T-cell (primary cell): ENCODE measurements at regions of chr7 and their contacts with region 1.

Region 1: DNA sequence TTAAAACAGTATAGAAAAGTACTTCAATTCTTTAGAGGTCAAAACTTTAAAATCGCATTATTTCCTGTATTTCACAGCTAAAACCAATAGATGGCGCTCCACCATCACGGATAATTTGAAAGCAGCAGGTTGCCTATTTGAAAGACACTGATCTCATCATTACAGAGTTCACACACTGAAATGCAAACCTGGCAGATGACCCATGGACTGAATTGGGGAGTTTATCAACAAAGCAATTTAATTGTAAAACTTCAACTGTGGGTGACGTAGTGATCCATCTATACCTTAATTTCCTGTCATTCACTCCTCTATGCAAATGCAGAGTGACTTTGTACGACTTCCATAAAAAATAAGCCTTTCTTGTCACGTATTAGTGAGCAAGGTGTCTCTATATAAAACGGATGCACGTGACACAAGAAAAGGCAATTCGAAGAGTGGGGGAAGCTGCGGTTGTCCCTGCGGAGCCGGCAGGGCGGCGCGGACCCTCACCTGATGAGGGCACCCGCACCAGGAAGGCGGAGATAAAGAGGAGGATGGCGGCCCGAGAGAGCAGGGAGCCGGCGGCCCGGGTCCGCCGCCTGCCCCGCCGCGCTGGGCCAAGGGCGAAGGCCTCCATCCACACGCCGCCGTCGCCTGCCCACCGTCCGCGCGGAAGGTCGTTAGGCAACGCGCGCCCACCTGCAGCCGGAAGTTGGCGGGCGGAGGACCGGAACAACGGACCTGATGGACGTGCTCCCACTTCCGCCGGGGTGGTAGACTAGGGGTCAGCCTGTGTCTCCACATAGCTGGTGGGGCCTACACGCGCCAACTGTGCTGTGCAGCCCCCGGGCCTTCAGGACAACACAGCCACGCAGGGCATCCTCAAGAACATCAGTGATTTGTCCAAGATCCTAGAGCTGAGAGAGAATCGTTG is at the start of gene ZPBP:
- DNase-seq: peak in 32 of 35 experiments; percentile 8 to 82 (median 40)
- ATAC-seq: peak; percentile 71 to 80 (median 79)
- H3K4me3 ChIP-seq: peak within 1 kb of the TSS; percentile 55 to 56
- H3K4me3 Mint-ChIP-seq: peak within 1 kb of the TSS; percentile 87 to 90 (median 87)
- H3K27ac ChIP-seq: peak within 1 kb of the TSS; percentile 45
- H3K27ac Mint-ChIP-seq: peak within 1 kb of the TSS; percentile 66 to 80
- H3K4me1 ChIP-seq: peaks cover 2 to 4% of the 10 kb centered on the region in 2 experiments
- H3K4me1 Mint-ChIP-seq: peaks cover 8 to 17% (median 15%) of the 10 kb centered on the region in 3 donors
- H3K27me3 ChIP-seq: peaks cover 0 to 2% of the 10 kb centered on the region in 2 experiments
- H3K27me3 Mint-ChIP-seq: no peaks in the 10 kb centered on the region
- total RNA-seq, gene ZPBP: 0.46 TPM in 1 of 5 donors, not detected in the others

Region 2: GRCh38 chr7:50142425-50143017 is 49.7 kb after region 1 on chr7:
- CTCF ChIA-PET with region 1: interaction called in 1 of 2 experiments, 18 read pairs
- POLR2A ChIA-PET with region 1: no interaction called
- DNase-seq: peak in 13 of 35 experiments; percentile 14 to 81 (median 30)
- ATAC-seq: peak in 3 of 4 experiments; percentile 46 to 81 (median 74)
- H3K4me3 ChIP-seq: no peak overlapping the region
- H3K4me3 Mint-ChIP-seq: peak overlapping the region; percentile 39 to 57 (median 57)
- H3K27ac ChIP-seq: peak overlapping the region; percentile 7
- H3K27ac Mint-ChIP-seq: peak overlapping the region; percentile 80 to 84
- H3K4me1 ChIP-seq: peaks cover 3 to 24% of the 10 kb centered on the region in 2 experiments
- H3K4me1 Mint-ChIP-seq: peaks cover 21 to 32% (median 26%) of the 10 kb centered on the region in 3 donors
- H3K27me3 ChIP-seq: no peaks in the 10 kb centered on the region
- H3K27me3 Mint-ChIP-seq: no peaks in the 10 kb centered on the region

Region 3: DNA sequence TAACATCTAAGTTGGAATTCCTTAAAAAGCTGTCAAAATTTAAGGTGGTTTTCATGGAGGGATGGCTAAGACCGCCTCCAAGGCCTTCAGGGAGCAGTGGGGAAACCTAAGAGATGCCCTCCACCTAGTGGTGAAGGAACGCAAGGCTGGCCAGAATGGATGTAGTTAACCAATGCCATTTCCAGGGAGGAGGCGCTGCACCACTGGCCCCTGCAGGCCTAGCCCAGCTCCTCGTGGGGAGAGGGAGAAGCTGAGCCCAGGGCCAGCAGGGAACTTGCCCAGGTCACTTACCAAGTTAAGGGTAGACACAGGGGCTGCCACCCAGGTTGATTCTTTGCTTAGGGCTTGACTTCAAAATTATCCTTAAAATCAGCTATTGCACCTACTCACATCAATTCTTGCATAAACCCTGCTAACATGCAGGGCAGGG is 325.3 kb after region 1 on chr7:
- CTCF ChIA-PET with region 1: interaction called, 11 to 14 read pairs
- POLR2A ChIA-PET with region 1: interaction called in 1 of 2 experiments, 3 read pairs
- DNase-seq: peak; percentile 28 to 84 (median 56)
- ATAC-seq: peak; percentile 84 to 92 (median 90)
- H3K4me3 ChIP-seq: no peak overlapping the region
- H3K4me3 Mint-ChIP-seq: no peak overlapping the region
- H3K27ac ChIP-seq: no peak overlapping the region
- H3K27ac Mint-ChIP-seq: no peak overlapping the region
- H3K4me1 ChIP-seq: peaks cover 8 to 18% of the 10 kb centered on the region in 2 experiments
- H3K4me1 Mint-ChIP-seq: peaks cover 24 to 34% (median 25%) of the 10 kb centered on the region in 3 donors
- H3K27me3 ChIP-seq: no peaks in the 10 kb centered on the region
- H3K27me3 Mint-ChIP-seq: no peaks in the 10 kb centered on the region

Region 4: DNA sequence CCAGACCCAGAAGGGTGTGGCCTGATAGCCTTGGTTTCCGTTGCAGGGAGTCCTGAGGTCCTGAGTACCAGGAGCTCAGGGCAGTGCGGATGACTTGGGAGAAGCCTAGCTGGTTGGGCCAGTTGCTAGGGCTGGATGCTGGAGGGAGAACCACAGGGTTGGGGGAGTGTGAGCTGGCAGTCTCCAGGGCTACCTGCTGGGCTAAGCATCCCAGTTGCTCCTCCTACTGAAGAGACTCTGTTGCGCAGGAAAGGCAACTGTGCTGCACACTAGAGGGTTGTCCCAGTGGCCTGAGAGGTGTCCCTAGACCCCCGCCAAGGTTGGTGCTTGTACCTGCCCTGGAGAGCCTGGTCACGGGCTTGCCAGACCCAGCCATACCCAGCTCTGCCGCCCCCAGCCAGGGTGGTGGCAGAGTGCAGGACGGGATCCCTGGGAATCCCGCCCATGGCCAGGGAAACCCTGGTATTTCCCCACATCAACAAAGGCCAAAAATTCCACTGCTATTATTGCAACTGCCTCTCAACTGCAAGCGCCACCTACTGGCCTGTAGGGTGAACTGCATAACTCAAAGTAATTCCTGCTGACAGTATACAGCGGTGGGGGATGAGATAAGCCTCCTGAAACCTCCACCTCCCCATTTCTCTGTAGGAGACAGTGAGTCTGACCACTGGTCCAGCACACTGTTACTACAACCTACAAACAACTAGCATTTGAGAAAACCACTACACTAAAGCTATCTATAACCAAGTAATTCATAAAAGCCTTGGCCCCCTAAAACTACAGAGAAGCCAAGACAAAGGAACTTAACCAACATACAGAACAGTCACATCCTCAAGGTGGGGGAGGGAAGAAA is 540.0 kb after region 1 on chr7:
- CTCF ChIA-PET with region 1: interaction called in 1 of 2 experiments, 11 read pairs
- POLR2A ChIA-PET with region 1: no interaction called
- DNase-seq: peak in 33 of 35 experiments; percentile 8 to 74 (median 46)
- ATAC-seq: peak; percentile 57 to 75 (median 66)
- H3K4me3 ChIP-seq: no peak overlapping the region
- H3K4me3 Mint-ChIP-seq: no peak overlapping the region
- H3K27ac ChIP-seq: no peak overlapping the region
- H3K27ac Mint-ChIP-seq: no peak overlapping the region
- H3K4me1 ChIP-seq: peaks cover 0 to 3% of the 10 kb centered on the region in 2 experiments
- H3K4me1 Mint-ChIP-seq: peaks cover 0 to 6% (median 3%) of the 10 kb centered on the region in 3 donors
- H3K27me3 ChIP-seq: no peaks in the 10 kb centered on the region
- H3K27me3 Mint-ChIP-seq: peaks cover 0 to 13% of the 10 kb centered on the region in 2 donors

Region 5: DNA sequence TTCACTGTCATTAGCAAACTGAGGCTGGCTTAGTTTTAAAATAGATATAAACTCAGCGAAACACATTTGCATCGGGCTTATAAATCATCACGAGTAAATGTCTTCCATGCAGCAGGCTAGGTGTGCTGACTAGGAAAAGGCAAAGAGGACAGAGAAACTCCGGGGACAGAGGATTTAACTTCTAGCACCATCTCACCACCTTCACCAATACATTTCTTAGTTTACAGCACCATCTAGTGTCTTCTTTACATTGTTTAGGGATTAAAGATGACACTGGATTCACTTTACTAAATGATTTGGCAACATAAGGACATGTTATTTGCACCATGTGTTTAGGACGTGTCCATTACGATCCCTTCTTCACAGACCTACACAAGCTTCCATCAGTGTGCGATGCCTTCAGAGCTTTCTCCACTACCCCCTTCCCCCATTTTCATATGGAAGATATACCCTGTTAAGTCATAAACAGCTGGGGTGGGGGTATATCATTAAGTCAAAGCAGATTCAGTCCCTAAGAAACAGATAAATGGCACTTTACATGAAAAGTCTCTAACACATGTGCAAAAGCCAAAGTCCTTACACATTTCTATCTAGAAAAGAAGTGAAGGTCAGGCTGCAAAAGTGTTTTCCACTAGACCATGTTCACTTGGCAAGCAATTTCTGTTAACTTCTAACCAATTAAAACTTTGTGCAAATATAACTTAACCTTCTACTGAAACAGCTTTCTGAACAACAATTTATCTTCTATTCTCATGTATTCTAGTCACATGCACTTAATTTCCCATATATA is 586.6 kb after region 1 on chr7:
- CTCF ChIA-PET with region 1: interaction called, 3 to 16 read pairs
- POLR2A ChIA-PET with region 1: no interaction called
- DNase-seq: peak in 1 of 35 experiments; percentile 73
- ATAC-seq: peak; percentile 58 to 75 (median 66)
- H3K4me3 ChIP-seq: no peak overlapping the region
- H3K4me3 Mint-ChIP-seq: no peak overlapping the region
- H3K27ac ChIP-seq: no peak overlapping the region
- H3K27ac Mint-ChIP-seq: no peak overlapping the region
- H3K4me1 ChIP-seq: no peaks in the 10 kb centered on the region
- H3K4me1 Mint-ChIP-seq: peaks cover 0 to 2% (median 0%) of the 10 kb centered on the region in 3 donors
- H3K27me3 ChIP-seq: peaks cover 0 to 6% of the 10 kb centered on the region in 2 experiments
- H3K27me3 Mint-ChIP-seq: peaks cover 0 to 7% of the 10 kb centered on the region in 2 donors